ENCODE measurements at regions of chr12 and their contacts with region 1.

Region 1: GRCh38 chr12:30806989-30807694 is 52.4 kb upstream of the CAPRIN2 start:
- DNase-seq: peak; percentile 64
- H3K4me3 ChIP-seq: no peak overlapping the region
- H3K27ac ChIP-seq: no peak overlapping the region
- H3K4me1 ChIP-seq: peaks cover 0 to 5% (median 2%) of the 10 kb centered on the region in 4 donors
- H3K27me3 ChIP-seq: no peaks in the 10 kb centered on the region
- CTCF ChIP-seq: peak; percentile 54 to 80 (median 78)
- EP300 ChIP-seq: no peak
- POLR2A ChIP-seq: no peak

Region 2: DNA sequence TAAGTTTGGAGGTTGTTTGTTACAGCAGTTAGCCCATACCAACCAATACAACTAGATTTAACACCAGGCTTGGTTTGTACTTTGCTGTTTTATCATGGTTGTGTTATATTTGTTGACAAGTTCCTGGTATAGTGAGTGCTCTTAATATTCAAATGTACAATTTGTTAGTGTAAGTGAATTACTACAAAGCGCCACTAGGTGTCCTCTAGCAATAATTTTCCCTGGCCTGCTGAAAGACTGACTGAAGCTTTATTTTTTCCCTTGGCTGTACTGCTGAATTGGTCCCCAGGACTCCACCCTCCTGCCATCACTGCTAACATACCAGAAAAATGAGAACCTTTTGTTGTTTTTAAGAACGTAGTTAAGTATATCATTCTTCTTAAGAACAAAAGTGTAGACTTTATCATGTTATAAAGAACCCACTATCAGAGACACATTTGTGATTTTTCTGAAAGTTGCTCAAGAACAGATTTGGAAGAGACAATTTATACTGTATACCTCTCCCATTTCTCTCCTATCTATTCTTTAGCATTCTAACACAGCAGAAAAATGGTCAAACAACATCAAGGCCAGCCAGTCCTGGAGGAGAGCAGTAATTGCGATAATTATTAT is 1733.4 kb before region 1 on chr12:
- intact Hi-C with region 1: loop called (anchors 10 kb)
- DNase-seq: no peak
- H3K4me3 ChIP-seq: no peak overlapping the region
- H3K27ac ChIP-seq: no peak overlapping the region
- H3K4me1 ChIP-seq: no peaks in the 10 kb centered on the region
- H3K27me3 ChIP-seq: no peaks in the 10 kb centered on the region
- CTCF ChIP-seq: peak; percentile 68 to 76 (median 69)
- EP300 ChIP-seq: no peak
- POLR2A ChIP-seq: no peak

Region 3: DNA sequence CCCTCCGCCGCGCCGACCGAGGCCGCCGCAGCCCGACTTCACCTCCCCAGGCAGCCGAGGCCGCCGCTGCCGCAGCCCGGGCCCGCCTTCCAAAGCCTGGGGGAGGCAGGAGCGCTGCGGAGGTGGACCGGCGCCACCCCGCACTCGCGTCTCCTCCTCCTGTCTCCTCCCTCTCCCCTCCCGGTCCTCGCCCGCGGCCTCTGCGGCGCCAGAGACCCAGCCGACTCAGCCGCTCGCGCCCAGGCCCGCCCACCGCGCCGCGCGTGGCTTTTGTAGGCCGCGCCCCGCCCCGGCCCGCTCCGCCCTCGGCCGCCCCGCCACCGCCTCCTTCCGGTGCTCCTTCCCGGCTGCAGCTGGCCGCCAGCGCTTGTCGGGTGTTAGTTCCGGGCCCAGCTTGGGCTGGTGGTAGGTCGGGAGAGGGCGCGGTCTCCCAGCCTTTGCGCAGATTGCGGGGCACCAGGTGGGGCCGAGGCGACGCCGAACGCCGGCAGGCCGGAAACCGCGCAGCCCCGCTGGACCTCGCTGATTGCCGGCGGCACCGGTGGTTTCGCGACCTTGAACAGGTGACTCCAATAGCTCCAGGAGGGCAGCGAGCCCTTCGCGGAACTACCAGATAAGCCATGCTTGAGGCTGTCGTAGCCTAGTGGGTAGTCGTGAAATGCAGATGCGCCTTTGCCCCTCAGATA is 52.3 kb before region 1 on chr12 and contains the start of gene CAPRIN2:
- intact Hi-C with region 1: loop called (anchors 5 kb)
- DNase-seq: peak; percentile 98
- H3K4me3 ChIP-seq: peak within 1 kb of the TSS; percentile 82 to 93 (median 86)
- H3K27ac ChIP-seq: peak within 1 kb of the TSS; percentile 87 to 90 (median 90)
- H3K4me1 ChIP-seq: peaks cover 14 to 21% (median 18%) of the 10 kb centered on the region in 4 donors
- H3K27me3 ChIP-seq: no peaks in the 10 kb centered on the region
- CTCF ChIP-seq: peak; percentile 36 to 49 (median 42)
- EP300 ChIP-seq: peak; percentile 33
- POLR2A ChIP-seq: no peak
- total RNA-seq, gene CAPRIN2: 21.5 to 44.4 (median 27.9) TPM

Measured in esophagus muscularis mucosa (tissue), 4 donors.